PC-9 (cell line): ENCODE measurements at regions of chr3 and their contacts with region 1.

Region 1: GRCh38 chr3:51662456-51662855 is 8.6 kb upstream of the TEX264 start:
- DNase-seq: no peak
- H3K4me3 ChIP-seq: no peak overlapping the region
- H3K27ac ChIP-seq: no peak overlapping the region
- H3K4me1 ChIP-seq: no peaks in the 10 kb centered on the region
- H3K27me3 ChIP-seq: no peaks in the 10 kb centered on the region
- CTCF ChIP-seq: no peak

Region 2: DNA sequence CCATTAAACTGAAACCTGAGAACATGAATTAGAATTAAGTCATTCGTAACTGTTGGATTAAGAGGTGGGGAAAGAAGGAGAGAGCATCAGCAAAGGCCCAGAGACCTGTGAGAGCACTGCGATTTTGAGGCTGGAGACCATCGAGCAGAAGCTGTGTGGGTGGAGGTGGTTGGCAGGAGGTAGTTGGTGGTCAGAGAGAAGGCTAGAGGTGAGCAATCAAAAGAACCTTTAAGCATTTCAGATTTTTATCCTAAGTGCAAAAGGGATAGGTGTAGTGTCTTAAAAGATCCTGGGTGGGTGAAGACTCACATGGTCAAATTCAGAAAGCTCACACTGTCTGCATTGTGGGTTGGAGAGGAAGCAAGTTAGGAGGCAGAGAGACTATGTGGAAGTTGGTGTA is 56.5 kb before region 1 on chr3:
- CTCF ChIA-PET with region 1: no interaction called
- POLR2A ChIA-PET with region 1: no interaction called
- intact Hi-C with region 1: no loop called
- DNase-seq: no peak
- H3K4me3 ChIP-seq: no peak overlapping the region
- H3K27ac ChIP-seq: no peak overlapping the region
- H3K4me1 ChIP-seq: no peaks in the 10 kb centered on the region
- H3K27me3 ChIP-seq: no peaks in the 10 kb centered on the region
- CTCF ChIP-seq: no peak

Region 3: GRCh38 chr3:51813539-51813938 is 151.1 kb after region 1 on chr3:
- CTCF ChIA-PET with region 1: no interaction called
- POLR2A ChIA-PET with region 1: no interaction called
- intact Hi-C with region 1: no loop called
- DNase-seq: no peak
- H3K4me3 ChIP-seq: no peak overlapping the region
- H3K27ac ChIP-seq: no peak overlapping the region
- H3K4me1 ChIP-seq: no peaks in the 10 kb centered on the region
- H3K27me3 ChIP-seq: peaks cover 11% of the 10 kb centered on the region; the same call in 1 of the 2 replicates
- CTCF ChIP-seq: no peak

Region 4: GRCh38 chr3:52405601-52406110 is 743.2 kb after region 1 on chr3:
- CTCF ChIA-PET with region 1: interaction called, 15 read pairs
- POLR2A ChIA-PET with region 1: no interaction called
- intact Hi-C with region 1: no loop called
- DNase-seq: no peak
- H3K4me3 ChIP-seq: no peak overlapping the region
- H3K27ac ChIP-seq: no peak overlapping the region
- H3K4me1 ChIP-seq: no peaks in the 10 kb centered on the region
- H3K27me3 ChIP-seq: no peaks in the 10 kb centered on the region
- CTCF ChIP-seq: no peak